ENCODE measurements at regions of chr10 and their contacts with region 1.

Region 1: DNA sequence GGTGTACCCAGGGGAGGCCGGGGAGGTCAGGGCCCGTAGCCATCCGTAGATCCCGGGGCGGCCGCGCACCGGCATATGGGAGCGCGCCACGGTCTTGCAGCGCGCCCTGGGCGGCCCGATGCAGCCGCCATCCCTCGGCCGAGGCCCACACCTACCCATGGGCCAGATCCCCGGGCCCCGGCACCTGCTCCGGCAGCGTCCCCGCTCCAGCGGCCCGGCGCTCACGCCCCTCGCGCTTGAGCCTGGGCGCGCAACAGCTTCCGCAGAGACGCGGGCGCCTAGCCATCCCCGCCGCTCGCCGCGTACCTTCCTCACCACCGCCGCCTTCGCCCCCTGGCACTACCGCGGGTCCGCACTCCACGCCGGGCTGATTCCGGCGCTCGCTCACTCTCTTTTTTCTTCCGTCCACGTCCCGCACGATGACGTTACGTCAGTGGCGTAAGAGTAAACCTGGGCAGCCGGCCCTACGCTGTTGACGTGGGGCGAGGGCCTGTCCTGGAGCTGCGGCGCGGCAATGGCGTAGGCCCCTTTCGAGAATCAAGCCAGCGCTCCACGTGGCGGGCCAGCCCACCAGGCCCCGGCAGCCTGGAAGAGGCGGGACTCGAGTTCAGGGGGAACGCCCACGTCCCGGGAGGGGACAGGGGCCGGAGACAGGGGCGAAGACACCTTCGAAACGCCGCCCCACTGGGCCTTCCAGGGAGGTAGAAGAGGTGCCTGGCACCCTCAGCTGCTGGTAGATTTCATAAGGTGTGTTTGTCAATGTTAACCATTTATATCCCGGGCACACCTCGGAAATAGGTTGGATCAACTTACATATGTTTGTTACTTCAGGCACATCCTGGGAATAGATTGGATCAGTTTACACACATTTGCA is at the start of gene ALDH18A1:
- DNase-seq: peak; percentile 85 to 97 (median 91)
- ATAC-seq: peak; percentile 95
- H3K4me3 ChIP-seq: peak within 1 kb of the TSS; percentile 79 to 82
- H3K4me3 Mint-ChIP-seq: peak within 1 kb of the TSS; percentile 99
- H3K27ac ChIP-seq: peak within 1 kb of the TSS; percentile 40 to 52
- H3K27ac Mint-ChIP-seq: peak within 1 kb of the TSS; percentile 84
- H3K4me1 ChIP-seq: peaks cover 13% of the 10 kb centered on the region
- H3K4me1 Mint-ChIP-seq: peaks cover 29% of the 10 kb centered on the region
- H3K27me3 ChIP-seq: no peaks in the 10 kb centered on the region
- H3K27me3 Mint-ChIP-seq: no peaks in the 10 kb centered on the region
- CTCF ChIP-seq: no peak
- total RNA-seq, gene ALDH18A1: 8.3 to 11.4 TPM

Region 2: GRCh38 chr10:95561182-95562075 is 95.1 kb before region 1 on chr10 and contains the start of gene SORBS1:
- CTCF ChIA-PET with region 1: no interaction called
- POLR2A ChIA-PET with region 1: no interaction called
- intact Hi-C with region 1: loop called (anchors 1 to 2 kb)
- DNase-seq: peak; percentile 73 to 95 (median 86)
- ATAC-seq: peak; percentile 97
- H3K4me3 ChIP-seq: peak within 1 kb of the TSS; percentile 71 to 99
- H3K4me3 Mint-ChIP-seq: peak within 1 kb of the TSS; percentile 99
- H3K27ac ChIP-seq: peak within 1 kb of the TSS in 1 of 2 experiments; percentile 59
- H3K27ac Mint-ChIP-seq: peak within 1 kb of the TSS; percentile 89
- H3K4me1 ChIP-seq: peaks cover 10% of the 10 kb centered on the region
- H3K4me1 Mint-ChIP-seq: peaks cover 10% of the 10 kb centered on the region
- H3K27me3 ChIP-seq: no peaks in the 10 kb centered on the region
- H3K27me3 Mint-ChIP-seq: peaks cover 10% of the 10 kb centered on the region
- CTCF ChIP-seq: no peak
- total RNA-seq, gene SORBS1: 3.0 to 3.9 TPM

Region 3: DNA sequence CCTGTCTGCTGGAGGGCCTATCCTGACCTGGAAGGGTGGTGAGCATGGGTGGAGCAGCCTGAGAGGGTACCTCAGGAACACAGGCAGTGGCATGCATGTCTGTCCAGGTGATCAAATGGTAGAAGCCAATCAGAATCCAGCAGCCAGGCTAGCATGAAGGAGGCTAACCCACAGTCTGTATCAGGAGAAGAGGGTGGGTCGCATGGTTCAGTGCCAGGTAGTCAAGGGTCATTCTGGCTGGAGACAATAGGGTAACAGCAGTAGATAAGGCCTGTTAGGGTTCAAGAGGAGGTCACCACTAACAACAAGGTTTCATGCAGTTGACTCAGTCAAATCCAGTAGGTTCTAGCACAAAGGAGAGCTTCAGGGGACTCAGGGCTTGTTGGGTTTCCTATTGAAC is 10.4 kb before region 1 on chr10:
- CTCF ChIA-PET with region 1: no interaction called
- POLR2A ChIA-PET with region 1: no interaction called
- intact Hi-C with region 1: no loop called
- DNase-seq: no peak
- ATAC-seq: no peak
- H3K4me3 ChIP-seq: no peak overlapping the region
- H3K4me3 Mint-ChIP-seq: no peak overlapping the region
- H3K27ac ChIP-seq: no peak overlapping the region
- H3K27ac Mint-ChIP-seq: no peak overlapping the region
- H3K4me1 ChIP-seq: no peaks in the 10 kb centered on the region
- H3K4me1 Mint-ChIP-seq: peaks cover 2% of the 10 kb centered on the region
- H3K27me3 ChIP-seq: no peaks in the 10 kb centered on the region
- H3K27me3 Mint-ChIP-seq: no peaks in the 10 kb centered on the region
- CTCF ChIP-seq: no peak

Region 4: DNA sequence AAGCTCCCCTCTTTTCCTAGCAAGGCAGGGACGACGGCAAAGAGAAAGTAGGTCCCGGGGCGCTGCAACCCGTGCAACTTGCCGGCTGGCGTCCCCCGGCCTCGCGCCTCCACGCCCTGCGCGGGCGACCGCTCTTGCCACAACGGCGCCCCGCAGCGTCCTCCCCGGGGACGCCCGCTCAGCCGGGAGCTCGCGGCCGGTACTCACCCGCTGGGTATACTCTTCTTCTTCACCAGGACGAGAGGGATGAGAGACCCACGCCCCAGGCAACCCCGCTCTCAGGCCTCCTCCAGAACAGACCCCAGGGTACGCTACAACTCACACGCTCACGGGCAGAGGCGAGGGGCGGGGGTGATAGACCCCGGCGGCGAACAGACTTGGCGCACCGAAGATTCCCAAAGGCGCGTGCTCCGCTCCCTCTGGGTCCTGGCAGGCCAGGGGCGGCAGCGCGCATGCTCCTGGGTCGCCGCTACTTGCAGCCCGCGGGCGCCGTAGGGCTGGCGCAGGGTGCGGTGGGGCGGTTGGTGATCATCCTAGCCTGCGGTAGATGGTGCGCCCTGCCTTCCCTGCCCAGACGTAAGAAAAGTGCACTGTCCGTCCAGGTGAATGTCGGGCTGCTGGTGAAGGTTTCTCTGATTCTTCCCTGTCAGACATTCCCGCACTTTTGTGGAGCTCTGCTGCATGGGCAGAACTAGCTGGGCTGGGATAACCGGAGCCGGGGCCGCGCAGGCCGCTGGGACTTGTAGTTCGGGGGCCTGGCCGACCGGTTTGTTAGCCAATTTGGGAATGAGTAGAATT is 251.1 kb after region 1 on chr10 and contains the start of gene CC2D2B:
- CTCF ChIA-PET with region 1: interaction called, 3 read pairs
- POLR2A ChIA-PET with region 1: no interaction called
- intact Hi-C with region 1: loop called in 1 of 2 experiments (anchors 5 kb)
- DNase-seq: peak; percentile 21 to 79 (median 59)
- ATAC-seq: peak; percentile 72
- H3K4me3 ChIP-seq: peak within 1 kb of the TSS; percentile 77 to 82
- H3K4me3 Mint-ChIP-seq: peak within 1 kb of the TSS; percentile 90
- H3K27ac ChIP-seq: peak within 1 kb of the TSS; percentile 61 to 67
- H3K27ac Mint-ChIP-seq: peak within 1 kb of the TSS; percentile 83
- H3K4me1 ChIP-seq: no peaks in the 10 kb centered on the region
- H3K4me1 Mint-ChIP-seq: peaks cover 18% of the 10 kb centered on the region
- H3K27me3 ChIP-seq: no peaks in the 10 kb centered on the region
- H3K27me3 Mint-ChIP-seq: no peaks in the 10 kb centered on the region
- CTCF ChIP-seq: no peak
- total RNA-seq, gene CC2D2B: not detected

Region 5: DNA sequence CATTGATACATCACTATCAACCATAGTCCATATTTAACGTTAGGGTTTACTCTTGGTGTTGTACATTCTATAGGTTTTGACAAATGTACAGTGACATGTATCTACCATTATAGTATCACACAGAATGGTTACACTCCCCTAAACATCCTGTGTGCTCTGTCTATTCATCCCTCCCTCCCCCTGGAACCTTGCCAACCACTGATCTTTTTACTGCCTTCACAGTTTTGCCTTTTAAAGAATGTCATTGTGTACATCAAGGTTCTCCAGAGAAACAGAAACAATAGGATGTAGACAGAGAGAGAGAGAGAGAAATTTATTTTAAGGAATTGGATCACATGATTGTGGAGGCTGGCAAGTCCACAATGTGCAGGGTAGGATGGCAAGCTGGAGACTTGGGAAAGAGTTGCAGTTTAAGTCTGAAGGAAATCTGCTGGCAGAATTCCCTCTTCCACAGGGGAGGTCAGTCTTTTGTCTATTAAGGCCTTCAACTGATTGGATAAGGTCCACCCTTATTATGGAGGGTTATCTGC is 341.8 kb after region 1 on chr10:
- CTCF ChIA-PET with region 1: no interaction called
- POLR2A ChIA-PET with region 1: no interaction called
- intact Hi-C with region 1: no loop called
- DNase-seq: no peak
- ATAC-seq: no peak
- H3K4me3 ChIP-seq: no peak overlapping the region
- H3K4me3 Mint-ChIP-seq: no peak overlapping the region
- H3K27ac ChIP-seq: no peak overlapping the region
- H3K27ac Mint-ChIP-seq: no peak overlapping the region
- H3K4me1 ChIP-seq: no peaks in the 10 kb centered on the region
- H3K4me1 Mint-ChIP-seq: no peaks in the 10 kb centered on the region
- H3K27me3 ChIP-seq: no peaks in the 10 kb centered on the region
- H3K27me3 Mint-ChIP-seq: no peaks in the 10 kb centered on the region
- CTCF ChIP-seq: no peak

Measured in CD8-positive, alpha-beta T cell (primary cell).